ENCODE measurements at regions of chr19 and their contacts with region 1.

Region 1: GRCh38 chr19:34253699-34254551 is 429 bp upstream of the GARRE1 start:
- DNase-seq: peak; percentile 90
- ATAC-seq: peak; percentile 23
- H3K4me3 Mint-ChIP-seq: peak overlapping the region; percentile 98
- H3K27ac Mint-ChIP-seq: peak overlapping the region; percentile 96
- H3K4me1 Mint-ChIP-seq: peaks cover 37% of the 10 kb centered on the region
- H3K27me3 Mint-ChIP-seq: no peaks in the 10 kb centered on the region
- CTCF ChIP-seq: no peak

Region 2: DNA sequence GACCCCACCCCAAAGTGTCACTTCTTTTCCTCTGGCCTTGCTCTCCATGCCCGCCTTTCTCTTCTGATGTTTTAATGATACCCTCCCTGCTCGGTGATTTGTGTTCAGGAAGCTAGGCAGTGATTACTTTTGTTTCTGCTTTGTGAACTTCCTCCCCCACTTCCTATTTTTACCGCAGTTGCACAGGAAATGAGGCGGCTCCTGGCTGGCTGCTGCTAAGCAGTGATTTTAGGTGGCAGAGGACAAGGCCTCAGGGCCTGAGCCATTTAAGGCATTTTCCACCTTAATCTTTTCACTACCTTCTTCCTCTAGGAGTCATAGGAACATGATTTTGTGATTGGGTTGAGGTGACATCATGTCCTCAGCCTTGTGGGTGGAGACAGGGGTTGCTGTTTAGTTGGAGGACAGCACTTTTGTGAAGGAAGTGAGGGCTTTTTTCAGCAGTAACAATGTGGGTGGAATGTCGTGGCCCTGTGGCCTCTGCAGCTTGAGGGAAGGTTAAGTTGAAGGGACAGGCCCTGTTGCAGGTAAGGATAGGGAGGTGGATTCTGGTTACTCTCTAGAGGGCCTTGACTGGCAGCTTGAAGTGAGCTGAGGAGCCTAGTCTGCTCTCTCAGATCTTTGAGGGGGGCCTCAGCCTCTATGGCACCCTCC is 16.2 kb after region 1 on chr19:
- CTCF ChIA-PET with region 1: interaction called, 3 read pairs
- POLR2A ChIA-PET with region 1: interaction called, 17 read pairs
- intact Hi-C with region 1: loop called (anchors 1 kb)
- DNase-seq: peak; percentile 47
- ATAC-seq: peak; percentile 87
- H3K4me3 Mint-ChIP-seq: peak overlapping the region; percentile 77
- H3K27ac Mint-ChIP-seq: peak overlapping the region; percentile 95
- H3K4me1 Mint-ChIP-seq: peaks cover 85% of the 10 kb centered on the region
- H3K27me3 Mint-ChIP-seq: no peaks in the 10 kb centered on the region
- CTCF ChIP-seq: no peak

Region 3: GRCh38 chr19:34317311-34317927 is 63.5 kb after region 1 on chr19:
- CTCF ChIA-PET with region 1: no interaction called
- POLR2A ChIA-PET with region 1: interaction called, 6 read pairs
- intact Hi-C with region 1: loop called (anchors 1 kb)
- DNase-seq: no peak
- ATAC-seq: no peak
- H3K4me3 Mint-ChIP-seq: peak overlapping the region; percentile 42
- H3K27ac Mint-ChIP-seq: peak overlapping the region; percentile 46
- H3K4me1 Mint-ChIP-seq: peaks cover 57% of the 10 kb centered on the region
- H3K27me3 Mint-ChIP-seq: no peaks in the 10 kb centered on the region
- CTCF ChIP-seq: no peak

Region 4: GRCh38 chr19:34336781-34337271 is 82.9 kb after region 1 on chr19:
- CTCF ChIA-PET with region 1: no interaction called
- POLR2A ChIA-PET with region 1: interaction called, 6 read pairs
- intact Hi-C with region 1: loop called (anchors 1 kb)
- DNase-seq: no peak
- ATAC-seq: no peak
- H3K4me3 Mint-ChIP-seq: no peak overlapping the region
- H3K27ac Mint-ChIP-seq: no peak overlapping the region
- H3K4me1 Mint-ChIP-seq: peaks cover 5% of the 10 kb centered on the region
- H3K27me3 Mint-ChIP-seq: no peaks in the 10 kb centered on the region
- CTCF ChIP-seq: peak; percentile 20

Region 5: DNA sequence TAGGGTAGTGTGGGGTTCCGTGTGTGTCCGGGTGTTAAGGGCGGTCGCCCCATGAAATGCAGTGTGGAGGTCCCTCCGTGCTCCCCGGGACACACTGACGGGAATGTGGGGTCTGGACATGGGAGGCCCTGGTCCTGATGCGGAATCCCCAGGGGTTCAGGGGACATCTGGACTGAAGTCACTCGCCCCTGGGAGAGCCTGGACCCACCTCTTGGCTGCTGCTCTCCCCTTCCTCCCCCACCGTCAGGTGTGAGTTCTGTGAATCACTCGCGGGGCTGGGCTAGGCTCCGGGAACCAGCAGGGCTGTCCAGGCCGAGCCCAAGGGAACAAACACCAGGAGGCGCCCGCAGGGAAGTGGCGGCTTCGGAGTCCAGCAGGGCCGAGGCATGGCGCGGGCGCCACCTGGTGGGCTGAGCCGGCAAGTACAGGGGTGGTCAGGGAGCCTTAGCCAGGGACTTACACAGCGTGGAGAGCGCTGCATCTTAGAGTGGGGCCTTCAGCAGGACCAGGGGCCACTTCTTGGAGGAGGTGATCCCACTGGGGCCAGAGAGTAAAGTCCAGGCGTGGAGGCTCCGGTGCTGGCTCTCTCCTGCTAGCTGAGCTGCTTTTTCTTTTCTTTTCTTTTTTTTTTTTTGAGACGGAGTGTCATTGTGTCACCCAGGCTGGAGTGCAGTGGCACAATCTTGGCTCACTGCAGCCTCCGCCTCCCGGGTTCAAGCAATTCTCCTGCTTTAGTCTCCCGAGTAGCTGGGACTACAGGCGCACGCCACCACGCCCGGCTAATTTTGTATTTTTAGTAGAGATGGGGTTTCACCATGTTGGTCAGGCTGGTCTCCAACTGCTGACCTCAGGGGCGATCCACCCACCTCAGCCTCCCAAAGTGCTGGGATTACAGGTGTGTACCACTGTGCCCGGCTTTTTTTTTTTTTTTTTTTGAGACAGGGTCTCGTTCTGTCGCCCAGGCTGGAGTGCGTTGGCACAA is 247.7 kb after region 1 on chr19:
- CTCF ChIA-PET with region 1: no interaction called
- POLR2A ChIA-PET with region 1: no interaction called
- intact Hi-C with region 1: loop called (anchors 5 kb)
- DNase-seq: peak; percentile 83
- ATAC-seq: peak; percentile 78
- H3K4me3 Mint-ChIP-seq: peak overlapping the region; percentile 63
- H3K27ac Mint-ChIP-seq: no peak overlapping the region
- H3K4me1 Mint-ChIP-seq: peaks cover 15% of the 10 kb centered on the region
- H3K27me3 Mint-ChIP-seq: peaks cover 6% of the 10 kb centered on the region
- CTCF ChIP-seq: peak; percentile 71

Measured in activated B cell treated with CpG ODN at 0.5 μM for 24 hours (primary cell).